ENCODE measurements at regions of chr1 and their contacts with region 1.

Region 1: DNA sequence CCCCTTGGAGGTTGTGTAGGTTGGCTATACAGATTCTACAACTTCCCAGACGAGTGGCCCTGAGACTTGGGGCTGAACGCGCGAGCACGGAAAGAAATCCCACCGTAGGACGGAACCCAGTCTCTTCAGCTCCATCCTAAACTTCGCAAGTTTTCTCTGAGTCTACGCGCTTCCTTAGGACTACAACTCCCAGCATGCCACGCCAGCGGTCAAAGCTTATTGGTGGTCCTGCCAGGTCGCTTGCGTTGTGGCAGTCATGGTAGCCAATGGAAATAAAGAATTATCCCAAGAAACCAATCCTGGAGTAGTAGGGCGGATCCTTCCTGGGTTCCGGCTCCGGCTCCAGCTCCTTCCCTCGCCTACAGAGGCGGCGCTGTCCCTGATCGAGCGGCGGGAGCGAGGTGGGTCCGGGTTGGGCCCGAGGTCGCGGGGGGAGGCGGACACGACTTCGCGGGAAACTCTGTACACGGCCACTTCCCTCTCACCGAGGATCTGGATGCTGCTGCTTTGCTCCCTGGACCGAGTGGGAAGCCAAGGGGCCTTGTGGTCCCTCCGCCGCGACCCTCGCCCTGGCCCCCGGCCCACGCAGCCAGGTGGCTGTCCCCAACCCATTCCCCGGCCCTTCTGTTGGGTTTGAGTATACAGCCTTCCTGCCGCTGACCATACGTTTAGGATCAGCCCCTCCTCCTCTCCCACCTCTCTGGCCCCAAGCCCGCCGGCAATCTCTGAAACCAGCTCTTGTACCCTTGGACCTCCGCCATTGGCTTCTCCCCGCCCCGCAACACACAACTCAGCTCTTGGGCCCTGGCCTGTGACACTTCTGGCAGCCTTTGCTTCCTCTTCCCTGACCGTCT is at the start of gene ZNF691:
- DNase-seq: peak; percentile 90 to 93
- H3K4me3 ChIP-seq: peak within 1 kb of the TSS; percentile 75
- H3K4me3 Mint-ChIP-seq: peak within 1 kb of the TSS; percentile 100
- H3K27ac Mint-ChIP-seq: peak within 1 kb of the TSS; percentile 94
- H3K4me1 ChIP-seq: no peaks in the 10 kb centered on the region; the same call in 1 of the 2 replicates
- H3K4me1 Mint-ChIP-seq: peaks cover 10% of the 10 kb centered on the region
- H3K27me3 ChIP-seq: no peaks in the 10 kb centered on the region
- H3K27me3 Mint-ChIP-seq: no peaks in the 10 kb centered on the region
- CTCF ChIP-seq: peak in 1 of 2 experiments; percentile 44
- total RNA-seq, gene ZNF691: 6.2 and 7.8 TPM in 2 replicates

Region 2: DNA sequence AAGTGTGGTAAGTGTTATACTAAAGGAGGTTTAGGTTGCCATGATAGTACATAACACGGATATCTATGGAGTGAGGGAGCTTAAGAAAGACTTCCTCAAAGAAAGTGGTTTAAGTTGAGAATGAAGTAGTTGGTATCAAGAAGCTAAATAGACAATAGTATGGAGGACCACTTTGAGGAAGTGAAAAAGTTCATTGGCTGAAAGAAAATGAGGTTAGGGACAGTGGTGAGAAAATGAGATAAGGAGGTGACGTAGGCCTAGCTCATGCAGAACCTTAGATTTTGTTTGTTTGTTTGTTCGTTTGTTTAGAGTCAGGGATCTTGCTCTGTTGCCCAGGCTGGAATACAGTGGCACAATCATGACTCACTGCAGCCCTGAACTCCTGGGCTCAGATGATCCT is 260.5 kb before region 1 on chr1:
- CTCF ChIA-PET with region 1: no interaction called
- POLR2A ChIA-PET with region 1: no interaction called
- intact Hi-C with region 1: no loop called
- DNase-seq: no peak
- H3K4me3 ChIP-seq: no peak overlapping the region
- H3K4me3 Mint-ChIP-seq: no peak overlapping the region
- H3K27ac Mint-ChIP-seq: no peak overlapping the region
- H3K4me1 ChIP-seq: no peaks in the 10 kb centered on the region
- H3K4me1 Mint-ChIP-seq: no peaks in the 10 kb centered on the region
- H3K27me3 ChIP-seq: no peaks in the 10 kb centered on the region
- H3K27me3 Mint-ChIP-seq: no peaks in the 10 kb centered on the region
- CTCF ChIP-seq: no peak

Region 3: DNA sequence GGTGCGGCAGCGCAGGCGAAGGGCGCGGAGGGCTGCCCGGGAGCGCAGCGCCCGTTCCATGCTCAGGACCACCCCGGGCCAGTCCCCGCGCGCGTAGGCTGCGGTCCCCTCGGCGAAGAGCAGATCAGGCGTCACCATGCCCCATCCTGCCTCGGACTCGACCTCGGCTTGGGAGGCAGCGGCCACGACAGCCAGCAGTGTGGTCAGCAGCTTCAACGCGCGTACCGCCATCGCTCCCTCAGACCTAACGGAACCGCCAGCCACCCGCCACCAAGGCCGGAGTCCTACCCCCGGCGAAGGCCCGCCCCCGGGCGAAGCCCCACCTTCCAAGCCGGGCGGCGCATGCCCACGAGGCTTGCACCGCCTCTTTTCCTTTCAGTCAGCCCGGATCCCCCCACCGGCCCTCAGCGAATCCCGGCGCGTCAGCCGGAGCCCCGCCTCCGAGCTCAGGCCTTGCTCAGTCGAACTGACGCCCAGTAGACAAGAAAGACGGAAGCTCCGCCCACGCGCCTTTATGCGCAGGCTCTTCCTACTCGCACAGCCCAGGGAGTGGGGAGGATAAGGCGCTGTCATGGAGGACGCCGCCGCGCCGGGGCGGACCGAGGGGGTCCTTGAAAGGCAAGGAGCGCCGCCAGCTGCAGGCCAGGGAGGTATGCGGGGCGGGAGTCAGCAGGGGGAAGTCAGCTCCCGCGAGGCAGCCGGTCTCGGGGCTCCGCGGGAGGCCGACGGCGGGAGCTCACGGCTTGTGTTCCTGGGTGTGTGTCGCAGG is 79.6 kb before region 1 on chr1 and contains the starts of genes C1orf50 and P3H1:
- CTCF ChIA-PET with region 1: interaction called, 4 read pairs
- POLR2A ChIA-PET with region 1: interaction called, 10 read pairs
- intact Hi-C with region 1: no loop called
- DNase-seq: peak; percentile 98 to 99
- H3K4me3 ChIP-seq: peak within 1 kb of the TSS; percentile 90
- H3K4me3 Mint-ChIP-seq: no peak within 1 kb of the TSS
- H3K27ac Mint-ChIP-seq: peak within 1 kb of the TSS; percentile 80
- H3K4me1 ChIP-seq: peaks cover 13% of the 10 kb centered on the region
- H3K4me1 Mint-ChIP-seq: no peaks in the 10 kb centered on the region
- H3K27me3 ChIP-seq: no peaks in the 10 kb centered on the region
- H3K27me3 Mint-ChIP-seq: no peaks in the 10 kb centered on the region
- CTCF ChIP-seq: no peak
- total RNA-seq, gene C1orf50: 6.1 and 6.3 TPM in 2 replicates
- total RNA-seq, gene P3H1: 20.5 and 21.2 TPM in 2 replicates

Region 4: GRCh38 chr1:42816585-42817434 is 29.7 kb before region 1 on chr1 and contains the starts of genes ERMAP and SVBP:
- CTCF ChIA-PET with region 1: interaction called, 3 read pairs
- POLR2A ChIA-PET with region 1: interaction called, 13 read pairs
- intact Hi-C with region 1: no loop called
- DNase-seq: peak; percentile 88 to 92
- H3K4me3 ChIP-seq: peak within 1 kb of the TSS; percentile 70
- H3K4me3 Mint-ChIP-seq: peak within 1 kb of the TSS; percentile 87
- H3K27ac Mint-ChIP-seq: peak within 1 kb of the TSS; percentile 64
- H3K4me1 ChIP-seq: peaks cover 6% of the 10 kb centered on the region; the same call in 1 of the 2 replicates
- H3K4me1 Mint-ChIP-seq: peaks cover 7% of the 10 kb centered on the region
- H3K27me3 ChIP-seq: no peaks in the 10 kb centered on the region
- H3K27me3 Mint-ChIP-seq: no peaks in the 10 kb centered on the region
- CTCF ChIP-seq: no peak
- total RNA-seq, gene ERMAP: 4.8 and 5.2 TPM in 2 replicates
- total RNA-seq, gene SVBP: 18.6 and 19.2 TPM in 2 replicates